Gastrocnemius medialis (tissue), 4 donors: ENCODE measurements at regions of chr19 and their contacts with region 1.

Region 1: GRCh38 chr19:39792999-39793546 is 14.4 kb downstream of the LEUTX start:
- DNase-seq: peak; percentile 35 to 72
- ATAC-seq: peak; percentile 95 to 98
- H3K4me3 ChIP-seq: peak overlapping the region; percentile 50 to 76 (median 63)
- H3K27ac ChIP-seq: peak overlapping the region; percentile 25 to 69 (median 56)
- H3K4me1 ChIP-seq: no peaks in the 10 kb centered on the region
- H3K27me3 ChIP-seq: no peaks in the 10 kb centered on the region
- CTCF ChIP-seq: peak; percentile 93 to 96 (median 95)
- POLR2A ChIP-seq: no peak

Region 2: DNA sequence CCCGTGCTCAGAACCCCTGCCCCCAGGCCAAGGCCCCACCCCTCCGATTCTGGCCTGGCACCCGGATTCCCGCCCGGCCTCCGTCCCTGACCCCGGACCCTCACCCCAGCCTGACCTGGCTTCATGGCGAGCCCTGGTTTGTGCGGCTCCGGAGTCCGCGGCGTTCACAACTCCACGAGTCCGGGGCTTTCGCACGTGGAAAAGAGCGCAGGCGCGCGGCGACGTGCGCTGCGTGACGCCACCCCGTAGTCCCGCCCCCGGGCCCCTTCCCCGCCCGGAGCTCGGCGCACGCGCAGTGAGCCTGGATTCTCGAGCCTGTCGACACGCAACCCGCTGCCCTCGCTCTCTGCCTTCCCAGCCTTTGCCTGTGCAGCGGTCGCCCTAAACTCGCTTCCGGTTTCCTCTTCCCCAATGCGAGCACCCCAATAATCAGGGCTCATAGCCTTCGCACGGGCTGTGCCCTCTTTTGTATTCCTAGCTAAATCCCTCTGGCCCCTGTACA is 53.2 kb after region 1 on chr19 and contains the start of gene FBL:
- in situ Hi-C with region 1: loop called (anchors 5 kb)
- intact Hi-C with region 1: loop called (anchors 1 kb)
- DNase-seq: peak; percentile 86 to 93
- ATAC-seq: peak; percentile 88 to 91
- H3K4me3 ChIP-seq: peak within 1 kb of the TSS; percentile 78 to 99 (median 88)
- H3K27ac ChIP-seq: peak within 1 kb of the TSS; percentile 93 to 96 (median 96)
- H3K4me1 ChIP-seq: peaks cover 38 to 50% of the 10 kb centered on the region in 2 donors
- H3K27me3 ChIP-seq: no peaks in the 10 kb centered on the region
- CTCF ChIP-seq: no peak
- POLR2A ChIP-seq: peak; percentile 72 to 75
- total RNA-seq, gene FBL: 40.4 to 79.4 (median 67.0) TPM